B cell (primary cell): ENCODE measurements at regions of chr17 and their contacts with region 1.

Region 1: DNA sequence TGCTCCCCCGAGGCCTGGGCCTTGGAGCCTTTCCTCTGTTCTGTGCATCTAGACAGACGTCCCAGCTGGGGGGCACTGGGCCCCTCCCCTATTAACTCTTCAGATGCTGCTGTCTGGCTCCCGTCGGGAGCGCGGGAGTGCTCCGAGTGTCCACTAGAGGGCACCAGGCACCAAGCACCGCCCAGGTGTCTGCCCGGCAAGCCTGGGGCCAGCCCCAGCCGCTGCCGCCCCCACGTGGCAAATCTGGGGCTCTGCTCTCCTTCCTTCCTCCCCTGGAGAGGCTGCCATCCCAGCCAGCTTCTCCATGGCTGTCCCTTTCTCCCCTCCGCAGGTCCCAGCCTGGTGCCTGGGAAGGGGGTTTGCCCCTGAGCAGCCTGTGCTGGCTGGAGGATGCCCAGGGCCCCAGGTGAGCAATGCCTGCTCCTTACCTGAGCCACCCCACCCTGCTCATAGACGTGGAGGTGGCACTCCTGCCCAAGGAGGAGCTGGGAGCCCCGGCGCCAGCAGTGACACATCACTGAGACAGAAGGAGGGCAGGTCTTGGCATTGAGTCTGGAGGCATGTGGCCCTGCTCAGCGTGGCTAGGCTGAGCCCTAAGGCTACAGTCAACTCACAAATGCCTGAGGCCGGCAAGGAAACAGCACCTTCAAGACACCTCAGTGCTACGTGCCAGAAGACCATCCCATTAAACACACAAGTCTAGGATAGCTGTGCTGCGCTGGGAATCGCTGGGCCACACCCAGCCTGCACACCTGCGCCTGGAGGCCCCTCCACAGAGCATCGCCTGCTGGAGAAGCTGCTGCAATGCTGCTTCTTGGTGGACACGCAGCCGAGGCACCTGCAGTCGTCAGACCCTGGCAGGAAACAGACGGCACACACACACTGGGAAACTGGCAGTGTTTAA is 19.7 kb downstream of the TMEM235 start:
- DNase-seq: peak; percentile 89
- ATAC-seq: peak; percentile 69
- H3K4me3 ChIP-seq: no peak overlapping the region
- H3K4me3 Mint-ChIP-seq: peak overlapping the region; percentile 57
- H3K27ac ChIP-seq: no peak overlapping the region
- H3K27ac Mint-ChIP-seq: peak overlapping the region; percentile 59
- H3K4me1 ChIP-seq: peaks cover 33 to 40% of the 10 kb centered on the region in 2 donors
- H3K4me1 Mint-ChIP-seq: peaks cover 33% of the 10 kb centered on the region
- H3K27me3 ChIP-seq: no peaks in the 10 kb centered on the region
- H3K27me3 Mint-ChIP-seq: no peaks in the 10 kb centered on the region
- CTCF ChIP-seq: peak; percentile 100

Region 2: DNA sequence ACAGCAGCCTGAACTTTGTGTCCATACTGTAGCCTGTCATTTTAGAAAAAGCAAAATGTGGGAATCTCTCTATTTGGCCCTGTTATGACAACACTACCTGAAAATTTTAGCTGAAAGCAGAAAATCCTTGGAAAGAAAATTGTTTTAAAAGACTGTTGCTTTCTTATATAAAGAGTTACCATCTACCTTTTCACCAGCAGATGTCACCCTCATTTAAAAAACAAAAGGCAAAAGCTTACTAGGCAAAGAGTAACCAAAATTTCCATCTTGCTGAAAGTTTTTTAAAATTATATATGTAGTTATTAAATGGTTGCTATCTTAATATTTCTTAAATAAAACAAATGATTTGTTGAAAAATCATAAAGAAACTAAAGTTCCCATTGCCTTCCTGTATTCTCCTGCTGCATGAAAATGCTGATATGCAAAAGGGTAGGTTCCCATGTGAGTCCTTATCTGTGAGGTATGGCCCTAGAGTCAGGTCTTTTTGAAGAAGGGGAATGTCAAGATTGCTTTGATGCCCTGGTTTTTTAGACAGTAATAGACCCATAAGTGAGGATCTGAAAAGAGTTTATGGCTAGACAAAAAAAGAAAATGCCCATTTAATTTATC is 231.7 kb before region 1 on chr17:
- CTCF ChIA-PET with region 1: interaction called, 20 read pairs
- POLR2A ChIA-PET with region 1: no interaction called
- intact Hi-C with region 1: loop called (anchors 1 kb)
- DNase-seq: peak; percentile 41
- ATAC-seq: no peak
- H3K4me3 ChIP-seq: no peak overlapping the region
- H3K4me3 Mint-ChIP-seq: no peak overlapping the region
- H3K27ac ChIP-seq: no peak overlapping the region
- H3K27ac Mint-ChIP-seq: no peak overlapping the region
- H3K4me1 ChIP-seq: no peaks in the 10 kb centered on the region
- H3K4me1 Mint-ChIP-seq: peaks cover 6% of the 10 kb centered on the region
- H3K27me3 ChIP-seq: no peaks in the 10 kb centered on the region
- H3K27me3 Mint-ChIP-seq: no peaks in the 10 kb centered on the region
- CTCF ChIP-seq: peak; percentile 77

Region 3: GRCh38 chr17:78112518-78113226 is 138.5 kb before region 1 on chr17:
- CTCF ChIA-PET with region 1: interaction called, 32 read pairs
- POLR2A ChIA-PET with region 1: interaction called, 4 read pairs
- intact Hi-C with region 1: loop called (anchors 1 kb)
- DNase-seq: peak; percentile 84
- ATAC-seq: peak; percentile 84
- H3K4me3 ChIP-seq: no peak overlapping the region
- H3K4me3 Mint-ChIP-seq: no peak overlapping the region
- H3K27ac ChIP-seq: peak overlapping the region in 1 of 2 donors; percentile 43
- H3K27ac Mint-ChIP-seq: peak overlapping the region; percentile 96
- H3K4me1 ChIP-seq: peaks cover 12 to 22% of the 10 kb centered on the region in 2 donors
- H3K4me1 Mint-ChIP-seq: peaks cover 24% of the 10 kb centered on the region
- H3K27me3 ChIP-seq: no peaks in the 10 kb centered on the region
- H3K27me3 Mint-ChIP-seq: no peaks in the 10 kb centered on the region
- CTCF ChIP-seq: peak; percentile 98

Region 4: DNA sequence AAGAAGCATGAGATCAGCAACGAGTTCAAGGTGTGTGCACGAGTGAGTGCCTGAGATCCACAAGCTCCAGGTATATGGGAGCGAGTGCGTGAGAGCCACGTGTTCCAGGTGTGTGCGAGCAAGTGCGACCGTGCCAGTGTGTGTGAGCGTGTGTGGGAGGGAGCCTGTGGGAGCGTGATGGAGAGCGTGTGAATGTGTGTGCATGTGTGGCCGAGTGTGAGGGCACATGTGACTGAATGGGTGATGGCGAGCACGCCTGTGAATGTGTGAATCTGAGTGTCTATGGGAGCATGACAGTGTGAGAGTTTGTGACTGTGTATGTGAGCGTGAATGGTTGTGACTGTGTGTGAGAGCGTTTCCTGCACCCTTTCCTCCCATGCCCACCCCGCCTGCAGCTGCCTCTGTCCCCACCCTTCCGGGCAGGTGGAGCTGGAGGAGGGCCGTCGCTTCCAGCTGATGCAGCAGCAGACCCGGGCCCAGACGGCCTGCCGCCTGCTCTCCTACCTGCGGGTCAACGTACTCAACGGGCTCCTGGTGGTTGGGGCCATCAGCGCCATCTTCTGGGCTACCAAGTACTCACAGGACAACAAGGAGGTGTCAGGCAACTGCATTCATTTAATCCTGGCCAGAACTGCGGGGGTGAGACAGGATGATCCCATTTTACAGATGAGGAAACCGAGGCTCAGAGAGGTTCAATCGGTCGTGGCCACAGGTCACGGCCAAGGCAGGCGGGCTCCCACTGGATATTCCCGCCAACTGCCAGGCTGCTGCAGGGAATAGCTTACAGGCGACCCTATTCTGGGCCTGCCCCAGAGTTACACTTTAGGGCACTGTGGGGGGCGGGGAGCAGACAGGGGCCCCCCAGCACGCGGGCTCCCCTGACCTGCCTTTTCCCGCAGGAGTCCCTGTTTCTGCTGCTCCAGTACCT is 116.9 kb before region 1 on chr17:
- CTCF ChIA-PET with region 1: interaction called, 30 read pairs
- POLR2A ChIA-PET with region 1: interaction called, 3 read pairs
- intact Hi-C with region 1: loop called (anchors 5 kb)
- DNase-seq: peak; percentile 90
- ATAC-seq: peak; percentile 7
- H3K4me3 ChIP-seq: peak overlapping the region in 3 of 5 experiments; percentile 6 to 35 (median 23)
- H3K4me3 Mint-ChIP-seq: peak overlapping the region; percentile 99
- H3K27ac ChIP-seq: peak overlapping the region; percentile 88 to 92
- H3K27ac Mint-ChIP-seq: peak overlapping the region; percentile 95
- H3K4me1 ChIP-seq: peaks cover 66 to 88% of the 10 kb centered on the region in 2 donors
- H3K4me1 Mint-ChIP-seq: peaks cover 79% of the 10 kb centered on the region
- H3K27me3 ChIP-seq: no peaks in the 10 kb centered on the region
- H3K27me3 Mint-ChIP-seq: no peaks in the 10 kb centered on the region
- CTCF ChIP-seq: peak; percentile 80

Region 5: DNA sequence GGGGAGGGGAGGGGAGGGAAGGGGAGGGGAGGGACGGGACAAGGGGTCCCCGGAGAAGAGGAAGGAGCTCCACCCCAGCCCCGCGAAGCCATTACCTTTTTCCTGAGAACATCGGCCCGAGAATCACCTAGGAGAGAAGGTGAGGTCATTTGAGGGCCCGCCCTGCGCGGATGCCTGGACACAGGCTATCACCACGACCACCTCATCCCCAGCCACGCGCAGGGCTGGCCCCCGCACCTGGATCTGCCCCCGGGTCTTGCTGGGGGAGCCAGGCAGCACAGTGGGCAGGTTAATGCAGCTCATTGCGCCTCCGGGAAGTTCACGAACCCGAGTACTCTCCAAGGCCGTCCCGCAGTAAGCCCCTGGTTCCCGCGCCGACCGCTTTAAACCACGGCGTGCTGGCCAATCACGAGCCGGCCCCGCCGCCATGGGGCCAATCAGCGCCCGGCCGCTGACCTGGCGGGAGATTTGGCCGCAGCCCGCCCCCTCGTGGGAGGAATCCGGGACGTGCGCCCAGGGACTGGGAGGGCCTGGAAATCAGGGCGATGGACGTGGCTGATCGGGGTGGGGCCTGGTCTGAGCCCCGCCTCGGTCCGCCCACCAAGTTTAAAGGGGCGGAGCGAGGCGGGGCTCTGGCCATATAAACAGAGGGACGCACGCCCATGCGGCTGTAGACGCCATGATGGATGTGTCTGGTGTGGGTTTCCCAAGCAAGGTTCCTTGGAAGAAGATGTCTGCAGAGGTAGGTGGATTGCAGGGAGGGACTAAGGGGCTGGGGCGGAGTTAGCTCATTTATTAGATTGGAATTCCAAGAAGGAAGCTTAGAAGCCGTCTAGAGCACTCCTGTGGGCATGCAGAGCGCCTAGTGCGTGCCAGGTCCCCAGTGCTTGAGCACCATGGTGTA is 64.2 kb before region 1 on chr17 and contains the starts of genes AFMID and TK1:
- CTCF ChIA-PET with region 1: interaction called, 13 read pairs
- POLR2A ChIA-PET with region 1: no interaction called
- intact Hi-C with region 1: no loop called
- DNase-seq: peak; percentile 89
- ATAC-seq: peak; percentile 95
- H3K4me3 ChIP-seq: peak within 1 kb of the TSS; percentile 31 to 77 (median 70)
- H3K4me3 Mint-ChIP-seq: peak within 1 kb of the TSS; percentile 91
- H3K27ac ChIP-seq: no peak within 1 kb of the TSS
- H3K27ac Mint-ChIP-seq: peak within 1 kb of the TSS; percentile 83
- H3K4me1 ChIP-seq: peaks cover 12 to 20% of the 10 kb centered on the region in 2 donors
- H3K4me1 Mint-ChIP-seq: peaks cover 14% of the 10 kb centered on the region
- H3K27me3 ChIP-seq: no peaks in the 10 kb centered on the region
- H3K27me3 Mint-ChIP-seq: no peaks in the 10 kb centered on the region
- CTCF ChIP-seq: peak; percentile 37
- total RNA-seq, gene AFMID: 18.2 and 23.3 TPM in 2 replicates
- total RNA-seq, gene TK1: 1.5 and 2.2 TPM in 2 replicates

Region 6: DNA sequence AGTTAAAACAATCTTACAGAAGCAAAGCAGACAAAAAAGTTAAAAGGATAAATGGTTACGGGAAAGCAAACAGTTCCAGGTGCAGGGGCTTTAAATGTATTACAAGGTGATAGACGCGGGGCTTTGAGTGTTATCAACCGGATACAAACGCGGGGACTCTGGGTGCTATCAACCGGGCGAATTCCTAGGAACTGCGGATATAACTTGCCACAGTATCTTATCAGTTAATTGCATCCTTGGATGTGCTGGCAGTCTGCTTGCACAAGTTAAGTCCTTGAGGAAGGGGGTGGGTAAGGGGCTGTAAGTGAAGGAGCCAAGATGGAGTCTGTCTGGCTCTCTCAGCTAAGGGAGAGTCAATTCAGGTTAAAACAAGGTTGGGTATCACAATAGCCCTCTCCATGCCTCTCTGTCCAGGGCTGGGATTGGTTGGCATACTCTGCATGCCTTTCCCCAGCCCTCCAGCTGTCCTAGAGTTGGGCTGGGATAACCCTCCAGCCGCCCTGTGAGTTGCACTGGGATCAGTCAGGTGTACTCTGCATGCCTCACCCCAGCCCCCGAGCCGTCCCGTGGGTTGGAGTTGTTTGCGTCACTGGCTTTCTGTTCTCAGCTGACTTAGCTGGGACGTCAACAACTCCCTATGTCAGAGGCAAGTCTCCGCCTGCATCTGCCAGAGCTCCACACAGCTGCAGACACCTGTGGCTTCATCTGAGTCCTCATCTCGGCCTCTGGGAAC is 21.2 kb after region 1 on chr17:
- CTCF ChIA-PET with region 1: interaction called, 15 read pairs
- POLR2A ChIA-PET with region 1: interaction called, 8 read pairs
- intact Hi-C with region 1: loop called (anchors 1 kb)
- DNase-seq: peak; percentile 80
- ATAC-seq: peak; percentile 70
- H3K4me3 ChIP-seq: no peak overlapping the region
- H3K4me3 Mint-ChIP-seq: peak overlapping the region; percentile 68
- H3K27ac ChIP-seq: no peak overlapping the region
- H3K27ac Mint-ChIP-seq: peak overlapping the region; percentile 83
- H3K4me1 ChIP-seq: peaks cover 4 to 33% of the 10 kb centered on the region in 2 donors
- H3K4me1 Mint-ChIP-seq: peaks cover 43% of the 10 kb centered on the region
- H3K27me3 ChIP-seq: peaks cover 0 to 23% (median 10%) of the 10 kb centered on the region in 4 experiments
- H3K27me3 Mint-ChIP-seq: peaks cover 25% of the 10 kb centered on the region
- CTCF ChIP-seq: no peak

Region 7: GRCh38 chr17:78360371-78361224 is 109.5 kb after region 1 on chr17:
- CTCF ChIA-PET with region 1: interaction called, 7 read pairs
- POLR2A ChIA-PET with region 1: interaction called, 6 read pairs
- intact Hi-C with region 1: loop called (anchors 2 kb)
- DNase-seq: peak; percentile 88
- ATAC-seq: peak; percentile 28
- H3K4me3 ChIP-seq: peak overlapping the region in 4 of 5 experiments; percentile 41 to 76 (median 64)
- H3K4me3 Mint-ChIP-seq: peak overlapping the region; percentile 91
- H3K27ac ChIP-seq: peak overlapping the region; percentile 8 to 66
- H3K27ac Mint-ChIP-seq: peak overlapping the region; percentile 90
- H3K4me1 ChIP-seq: peaks cover 39 to 52% of the 10 kb centered on the region in 2 donors
- H3K4me1 Mint-ChIP-seq: peaks cover 39% of the 10 kb centered on the region
- H3K27me3 ChIP-seq: peaks cover 0 to 35% (median 7%) of the 10 kb centered on the region in 4 experiments
- H3K27me3 Mint-ChIP-seq: peaks cover 20% of the 10 kb centered on the region
- CTCF ChIP-seq: peak; percentile 92